ENCODE measurements at regions of chr1 and their contacts with region 1.

Region 1: GRCh38 chr1:40722636-40723035 is 31.1 kb downstream of the NFYC start:
- DNase-seq: no peak
- H3K4me3 ChIP-seq: no peak overlapping the region
- H3K27ac ChIP-seq: no peak overlapping the region
- H3K4me1 ChIP-seq: no peaks in the 10 kb centered on the region
- H3K27me3 ChIP-seq: no peaks in the 10 kb centered on the region
- CTCF ChIP-seq: no peak
- EP300 ChIP-seq: no peak
- POLR2A ChIP-seq: no peak
- RAD21 ChIP-seq: 0 out of 4 replicates have a peak, but pooled peaks of 1 of the 2 experiments have one; percentile 9

Region 2: DNA sequence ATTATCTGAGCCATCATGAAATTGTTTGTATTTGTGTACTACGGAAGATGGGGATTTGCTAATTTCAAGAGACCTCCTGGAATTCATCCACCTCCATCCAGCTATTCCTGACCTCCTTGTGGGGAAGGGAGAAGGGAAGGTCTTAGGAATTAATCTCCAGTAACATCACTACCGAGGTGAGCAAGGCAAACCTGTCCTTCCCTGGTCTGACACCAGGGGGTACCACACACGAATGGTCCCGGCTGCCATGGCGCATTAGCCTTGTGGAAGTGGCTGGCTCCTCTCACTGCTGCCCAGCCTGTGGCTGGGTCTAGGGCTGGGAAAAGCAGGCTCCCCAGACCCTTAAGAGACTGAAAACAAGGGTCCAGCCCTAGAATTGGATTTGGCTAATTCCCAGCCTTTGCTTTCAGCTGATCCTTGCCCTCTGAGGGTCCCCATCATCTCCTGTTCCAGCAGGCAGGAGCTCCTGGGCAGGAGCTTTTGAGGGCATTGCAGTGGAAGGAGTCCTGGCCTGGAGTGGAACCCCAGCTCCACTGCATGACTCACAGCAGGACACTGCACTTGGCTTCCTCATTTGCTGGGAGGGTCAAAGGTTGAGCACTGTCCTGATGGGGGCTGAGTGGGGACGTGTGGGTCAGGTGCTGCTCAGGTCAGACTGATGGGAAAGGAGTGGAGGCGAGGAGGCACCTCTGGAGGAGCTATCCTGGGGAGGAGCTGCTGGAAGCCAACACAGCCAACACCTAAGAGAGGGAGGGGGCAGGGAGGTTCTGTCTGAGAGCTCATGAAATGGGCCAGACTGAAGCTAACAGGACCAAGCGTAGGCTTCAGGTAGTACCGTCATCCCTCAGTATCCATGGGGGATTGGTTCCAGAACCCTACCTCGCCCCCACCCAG is 91.9 kb before region 1 on chr1:
- CTCF ChIA-PET with region 1: interaction called, 13 read pairs
- POLR2A ChIA-PET with region 1: no interaction called
- DNase-seq: peak in 1 of 2 experiments; percentile 82
- H3K4me3 ChIP-seq: no peak overlapping the region
- H3K27ac ChIP-seq: no peak overlapping the region
- H3K4me1 ChIP-seq: no peaks in the 10 kb centered on the region; a peak in 1 of 7 replicates
- H3K27me3 ChIP-seq: no peaks in the 10 kb centered on the region; a peak in 1 of 7 replicates
- CTCF ChIP-seq: peak; percentile 83 to 91 (median 91)
- EP300 ChIP-seq: no peak
- POLR2A ChIP-seq: no peak
- RAD21 ChIP-seq: peak; percentile 62 to 72

Region 3: GRCh38 chr1:40699787-40700186 is 22.8 kb before region 1 on chr1:
- CTCF ChIA-PET with region 1: interaction called, 10 read pairs
- POLR2A ChIA-PET with region 1: interaction called, 4 read pairs
- DNase-seq: no peak
- H3K4me3 ChIP-seq: no peak overlapping the region
- H3K27ac ChIP-seq: no peak overlapping the region
- H3K4me1 ChIP-seq: peaks cover 0 to 6% (median 1%) of the 10 kb centered on the region in 4 experiments; a peak in 4 of 7 replicates
- H3K27me3 ChIP-seq: no peaks in the 10 kb centered on the region
- CTCF ChIP-seq: no peak
- EP300 ChIP-seq: no peak
- POLR2A ChIP-seq: no peak
- RAD21 ChIP-seq: no peak

Region 4: GRCh38 chr1:40732756-40733301 is 10.2 kb after region 1 on chr1:
- CTCF ChIA-PET with region 1: interaction called, 11 read pairs
- POLR2A ChIA-PET with region 1: interaction called, 6 read pairs
- DNase-seq: no peak
- H3K4me3 ChIP-seq: no peak overlapping the region
- H3K27ac ChIP-seq: no peak overlapping the region
- H3K4me1 ChIP-seq: no peaks in the 10 kb centered on the region; a peak in 1 of 7 replicates
- H3K27me3 ChIP-seq: no peaks in the 10 kb centered on the region
- CTCF ChIP-seq: no peak
- EP300 ChIP-seq: no peak
- POLR2A ChIP-seq: no peak
- RAD21 ChIP-seq: no peak

Region 5: DNA sequence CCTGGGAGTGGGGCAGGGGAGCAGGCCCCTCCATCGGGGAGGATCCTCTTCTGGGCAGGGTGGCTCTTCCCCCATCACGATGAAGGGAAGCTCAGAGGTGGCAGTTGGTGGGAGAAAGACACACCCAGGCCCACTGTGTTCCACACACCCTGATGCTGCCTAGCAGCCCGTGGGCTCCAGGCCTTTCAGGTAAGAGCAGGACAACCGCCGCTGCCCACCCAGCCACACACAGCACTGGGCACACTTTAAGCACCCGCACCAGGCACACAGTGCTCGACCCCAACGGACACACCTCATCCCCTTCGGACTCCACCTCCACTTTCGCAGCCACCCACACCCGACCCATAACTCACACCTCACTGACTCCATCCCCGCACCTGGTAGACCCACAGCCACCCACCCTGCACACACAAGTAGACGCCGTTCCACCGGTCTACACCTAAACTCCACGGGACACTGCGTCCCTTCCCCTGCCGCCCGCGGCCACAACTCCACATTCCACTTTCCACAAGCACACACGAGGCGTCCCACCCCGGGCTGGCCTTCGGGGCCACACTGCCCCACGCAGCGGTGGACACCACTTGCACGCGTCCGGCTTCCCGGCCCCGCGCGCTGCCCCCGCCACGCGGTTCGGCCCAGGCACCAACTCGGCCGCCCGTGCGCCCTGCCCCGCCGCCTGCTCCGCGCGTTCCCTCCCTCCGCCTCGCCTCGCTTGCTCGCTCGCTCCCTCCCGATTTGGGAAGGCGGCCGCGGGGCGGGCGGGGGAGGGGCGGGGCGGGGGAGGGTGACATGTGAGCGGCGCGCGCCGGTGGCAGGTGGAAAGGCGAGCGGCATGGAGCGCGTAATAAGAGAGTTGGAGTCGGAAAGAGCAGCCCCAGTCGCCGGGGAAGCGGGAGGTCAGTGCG is 60.6 kb after region 1 on chr1 and contains the start of gene KCNQ4:
- CTCF ChIA-PET with region 1: no interaction called
- POLR2A ChIA-PET with region 1: no interaction called
- DNase-seq: peak in 1 of 2 experiments; percentile 71
- H3K4me3 ChIP-seq: peak within 1 kb of the TSS; percentile 36 to 81 (median 49)
- H3K27ac ChIP-seq: no peak within 1 kb of the TSS
- H3K4me1 ChIP-seq: peaks cover 0 to 23% (median 17%) of the 10 kb centered on the region in 4 experiments; a peak in 6 of 7 replicates
- H3K27me3 ChIP-seq: peaks cover 0 to 35% (median 27%) of the 10 kb centered on the region in 4 experiments; a peak in 6 of 7 replicates
- CTCF ChIP-seq: no peak
- EP300 ChIP-seq: no peak
- POLR2A ChIP-seq: no peak
- RAD21 ChIP-seq: no peak
- total RNA-seq, gene KCNQ4: 3.5 and 3.9 TPM in 2 replicates

Region 6: GRCh38 chr1:40884055-40884795 is 161.6 kb after region 1 on chr1:
- CTCF ChIA-PET with region 1: no interaction called
- POLR2A ChIA-PET with region 1: no interaction called
- DNase-seq: peak in 1 of 2 experiments; percentile 52
- H3K4me3 ChIP-seq: peak overlapping the region in 3 of 4 experiments; percentile 10 to 54 (median 17); a peak in 5 of 8 replicates
- H3K27ac ChIP-seq: no peak overlapping the region
- H3K4me1 ChIP-seq: peaks cover 0 to 5% (median 2%) of the 10 kb centered on the region in 4 experiments; a peak in 3 of 7 replicates
- H3K27me3 ChIP-seq: peaks cover 0 to 16% (median 5%) of the 10 kb centered on the region in 4 experiments; a peak in 5 of 7 replicates
- CTCF ChIP-seq: no peak
- EP300 ChIP-seq: no peak
- POLR2A ChIP-seq: no peak
- RAD21 ChIP-seq: no peak

Region 7: DNA sequence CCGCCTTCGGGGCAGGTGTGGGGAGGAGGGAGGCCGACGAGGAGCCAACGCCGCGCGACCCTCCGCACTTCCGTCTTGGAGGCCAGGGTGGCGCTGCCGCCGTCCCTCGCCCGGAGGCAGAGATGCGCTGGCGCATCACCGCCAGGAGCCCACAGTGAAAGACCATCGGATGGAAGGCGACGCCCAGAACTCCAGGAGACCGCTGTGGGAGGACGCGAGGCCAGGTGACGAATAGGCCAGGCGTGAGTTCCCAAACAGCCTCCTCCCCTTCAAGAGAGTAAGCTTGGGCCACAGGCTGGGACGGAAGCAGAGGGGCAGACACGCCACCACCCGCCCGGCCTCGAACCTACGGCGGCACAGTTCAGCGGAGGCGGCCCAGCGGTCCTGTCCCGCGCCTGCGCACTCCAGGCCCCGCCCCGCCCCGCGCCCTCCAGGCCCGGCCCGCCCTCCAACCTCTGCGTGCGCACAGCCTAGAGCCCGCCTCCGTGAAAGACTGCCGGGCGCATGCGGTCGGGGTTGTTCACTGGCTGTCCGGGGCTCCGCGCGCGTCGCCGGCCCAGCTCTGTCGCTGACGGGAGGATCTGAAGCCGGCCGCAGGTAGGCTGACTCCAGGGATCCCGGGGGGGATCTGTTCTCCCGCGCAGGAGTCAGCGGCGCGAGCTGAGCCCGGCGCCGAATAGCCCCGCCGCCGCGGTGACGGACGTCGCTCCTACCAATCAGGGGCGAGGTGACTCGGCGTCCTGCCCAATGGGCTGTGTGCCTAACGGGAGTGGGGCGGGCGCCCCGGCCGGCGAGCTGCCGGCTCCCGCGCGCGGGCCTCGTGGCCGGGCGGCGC is 256.8 kb after region 1 on chr1 and contains the start of gene CTPS1:
- CTCF ChIA-PET with region 1: no interaction called
- POLR2A ChIA-PET with region 1: no interaction called
- DNase-seq: peak; percentile 67 to 96
- H3K4me3 ChIP-seq: peak within 1 kb of the TSS; percentile 78 to 87 (median 80)
- H3K27ac ChIP-seq: peak within 1 kb of the TSS; percentile 94
- H3K4me1 ChIP-seq: peaks cover 4 to 11% (median 6%) of the 10 kb centered on the region in 4 experiments; a peak in 5 of 7 replicates
- H3K27me3 ChIP-seq: no peaks in the 10 kb centered on the region
- CTCF ChIP-seq: peak; percentile 58 to 68 (median 62)
- EP300 ChIP-seq: no peak; a peak in 1 of 3 replicates
- POLR2A ChIP-seq: peak; percentile 71 to 86
- RAD21 ChIP-seq: no peak
- total RNA-seq, gene CTPS1: 98.4 and 103 TPM in 2 replicates

Measured in H1 (cell line).